Left cardiac atrium (tissue), 4 donors: ENCODE measurements at regions of chr9 and their contacts with region 1.

Region 1: DNA sequence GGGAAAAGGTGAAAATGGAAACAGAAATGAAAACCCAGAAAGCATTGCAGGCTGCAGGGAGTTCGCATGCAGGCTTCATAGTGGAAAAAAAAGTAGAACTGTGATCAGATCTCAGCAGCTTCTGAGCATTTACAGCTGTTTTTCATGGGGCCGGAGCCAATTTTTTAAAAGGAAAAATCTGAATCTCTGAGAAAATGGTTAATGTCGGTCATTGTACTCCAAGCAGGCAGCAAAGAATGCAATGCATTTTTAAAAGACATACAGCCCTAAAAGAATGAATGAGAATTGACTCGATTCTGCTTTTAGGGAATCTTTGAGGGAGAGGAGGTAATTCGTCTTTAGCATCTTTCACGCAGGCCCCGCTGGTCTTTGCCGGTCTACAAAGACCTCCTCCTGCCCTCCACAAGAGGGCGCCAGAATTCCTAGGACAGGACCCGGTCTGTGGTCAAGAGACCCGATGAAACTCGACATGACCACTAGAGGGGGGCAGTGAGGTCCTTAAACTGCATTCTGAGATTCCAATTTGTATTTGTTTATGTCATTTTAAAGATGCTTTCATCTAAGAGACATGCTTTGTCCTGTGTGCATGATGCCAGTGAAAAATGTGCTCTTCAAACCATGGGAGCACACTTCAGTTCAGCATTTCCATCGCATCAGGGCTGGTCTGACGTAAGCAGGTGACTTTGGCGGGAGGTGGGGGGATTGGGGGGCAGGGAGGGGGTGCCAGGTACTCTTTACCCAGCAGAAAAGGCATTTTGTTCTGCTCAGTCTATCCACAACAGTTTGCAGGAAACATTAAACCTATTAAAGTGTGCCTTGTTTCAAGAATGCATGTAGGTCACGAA is 43.7 kb upstream of the TMEM252 start:
- DNase-seq: peak; percentile 85
- ATAC-seq: peak; percentile 96 to 97

Region 2: GRCh38 chr9:68507130-68507805 is 77.1 kb before region 1 on chr9:
- intact Hi-C with region 1: no loop called
- DNase-seq: no peak
- ATAC-seq: peak; percentile 64 to 77

Region 3: GRCh38 chr9:68678430-68678829 is 94.0 kb after region 1 on chr9:
- intact Hi-C with region 1: loop called in 1 of 2 experiments (anchors 10 kb)
- DNase-seq: no peak
- ATAC-seq: peak; percentile 79 to 82

Region 4: GRCh38 chr9:68844631-68845612 is 260.5 kb after region 1 on chr9:
- intact Hi-C with region 1: loop called in 1 of 2 experiments (anchors 10 kb)
- DNase-seq: peak; percentile 60
- ATAC-seq: peak; percentile 70

Region 5: DNA sequence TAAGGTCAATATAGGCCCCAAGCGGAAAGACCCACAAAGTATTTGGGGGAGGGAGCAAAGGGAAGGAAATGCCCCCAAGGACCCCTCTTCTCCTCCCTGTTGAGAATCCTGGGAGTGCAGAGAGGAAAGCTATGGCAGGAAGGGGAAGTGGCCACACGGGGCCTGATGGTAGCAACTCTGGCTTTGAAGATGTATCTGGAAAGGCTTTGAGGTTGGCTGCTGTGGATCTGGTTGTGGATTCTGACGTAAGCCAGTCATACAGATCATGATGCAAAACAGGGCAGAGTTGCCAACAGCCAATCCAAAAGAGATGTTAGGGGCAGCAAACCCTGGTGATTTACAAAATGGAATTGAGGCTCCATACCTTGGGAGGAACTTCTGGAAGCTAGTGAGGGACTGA is 320.7 kb after region 1 on chr9:
- intact Hi-C with region 1: loop called in 1 of 2 experiments (anchors 10 kb)
- DNase-seq: no peak
- ATAC-seq: no peak

Region 6: GRCh38 chr9:68999393-69000105 is 415.1 kb after region 1 on chr9:
- intact Hi-C with region 1: loop called (anchors 2 to 10 kb)
- DNase-seq: peak; percentile 60
- ATAC-seq: peak; percentile 93 to 95

Region 7: GRCh38 chr9:69027355-69028096 is 443.1 kb after region 1 on chr9:
- intact Hi-C with region 1: loop called (anchors 2 to 5 kb)
- DNase-seq: no peak
- ATAC-seq: peak; percentile 64 to 67